AG04449 (cell line): ENCODE measurements at regions of chr3 and their contacts with region 1.

Region 1: DNA sequence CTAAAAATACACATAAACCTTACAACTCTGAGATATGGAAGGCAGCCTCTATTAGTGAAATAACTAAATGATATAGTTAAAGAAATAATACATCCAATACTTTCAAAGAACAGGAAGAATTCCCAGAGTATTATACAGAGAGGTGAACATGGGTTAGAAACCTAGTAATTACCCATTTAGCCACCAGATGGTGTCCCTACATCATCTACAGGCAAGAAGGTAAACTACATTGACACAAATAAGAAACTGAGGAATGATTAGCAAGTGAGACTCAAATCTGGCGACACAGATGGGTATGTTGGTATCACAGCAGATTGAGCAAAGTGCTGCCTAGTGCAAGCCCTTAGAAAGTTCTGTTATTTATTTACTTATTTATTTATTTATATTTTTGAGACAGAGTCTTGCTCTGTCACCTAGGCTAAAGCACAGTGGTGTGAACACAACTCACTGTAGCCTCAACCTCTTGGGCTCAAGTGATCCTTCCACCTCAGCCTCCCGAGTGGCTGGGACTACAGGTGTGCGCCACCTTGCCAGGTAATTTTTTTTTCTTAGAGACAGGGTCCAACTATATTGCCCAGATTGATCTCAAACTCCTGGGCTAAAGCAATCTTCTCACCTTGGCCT is 28.2 kb downstream of the NEK4 start:
- DNase-seq: no peak
- H3K4me3 ChIP-seq: no peak overlapping the region
- CTCF ChIP-seq: peak; percentile 52

Region 2: DNA sequence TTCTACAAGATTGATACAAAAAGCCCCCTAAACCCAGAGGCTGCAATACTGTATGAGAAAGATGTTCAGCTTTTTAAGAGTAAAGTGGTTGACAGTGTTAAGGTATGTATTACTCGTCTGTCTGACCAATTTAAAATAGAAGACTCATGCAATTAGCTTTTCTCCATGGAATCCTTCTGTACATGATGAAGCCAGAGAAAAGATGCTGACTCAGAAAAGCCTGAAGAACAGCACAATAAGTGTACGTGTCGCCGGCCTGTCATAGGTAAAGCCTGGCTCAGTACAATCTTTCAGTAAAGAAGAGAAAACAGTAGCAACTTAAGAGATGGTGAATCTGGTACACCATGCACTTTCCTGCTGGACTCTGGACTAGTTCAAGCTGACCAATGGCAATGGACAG is 11.8 kb after region 1 on chr3:
- CTCF ChIA-PET with region 1: interaction called, 12 read pairs
- POLR2A ChIA-PET with region 1: no interaction called
- DNase-seq: no peak
- H3K4me3 ChIP-seq: no peak overlapping the region
- CTCF ChIP-seq: no peak

Region 3: DNA sequence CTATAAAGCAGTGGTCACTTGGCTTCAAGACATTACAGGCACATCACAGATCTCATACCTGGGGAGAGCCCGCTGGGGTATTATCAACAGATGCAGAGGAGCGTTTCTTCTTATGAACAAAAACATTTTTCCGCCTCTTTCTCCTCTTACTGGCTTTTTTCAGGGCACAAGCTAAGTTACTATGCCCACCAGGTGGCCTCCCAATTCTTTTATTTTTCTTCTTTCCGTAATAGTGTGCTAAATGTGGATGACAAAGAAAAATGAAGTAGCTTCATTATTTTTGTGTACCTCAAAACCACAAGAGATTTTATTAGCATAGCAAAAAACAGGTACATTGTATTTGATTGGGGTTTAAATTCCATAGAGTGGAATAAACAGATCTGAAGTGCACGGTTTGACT is 165.0 kb after region 1 on chr3:
- CTCF ChIA-PET with region 1: no interaction called
- POLR2A ChIA-PET with region 1: no interaction called
- DNase-seq: no peak
- H3K4me3 ChIP-seq: no peak overlapping the region
- CTCF ChIP-seq: no peak

Region 4: GRCh38 chr3:52986938-52987337 is 244.4 kb after region 1 on chr3:
- CTCF ChIA-PET with region 1: interaction called, 12 read pairs
- POLR2A ChIA-PET with region 1: no interaction called
- DNase-seq: no peak
- H3K4me3 ChIP-seq: no peak overlapping the region
- CTCF ChIP-seq: peak; percentile 27

Region 5: DNA sequence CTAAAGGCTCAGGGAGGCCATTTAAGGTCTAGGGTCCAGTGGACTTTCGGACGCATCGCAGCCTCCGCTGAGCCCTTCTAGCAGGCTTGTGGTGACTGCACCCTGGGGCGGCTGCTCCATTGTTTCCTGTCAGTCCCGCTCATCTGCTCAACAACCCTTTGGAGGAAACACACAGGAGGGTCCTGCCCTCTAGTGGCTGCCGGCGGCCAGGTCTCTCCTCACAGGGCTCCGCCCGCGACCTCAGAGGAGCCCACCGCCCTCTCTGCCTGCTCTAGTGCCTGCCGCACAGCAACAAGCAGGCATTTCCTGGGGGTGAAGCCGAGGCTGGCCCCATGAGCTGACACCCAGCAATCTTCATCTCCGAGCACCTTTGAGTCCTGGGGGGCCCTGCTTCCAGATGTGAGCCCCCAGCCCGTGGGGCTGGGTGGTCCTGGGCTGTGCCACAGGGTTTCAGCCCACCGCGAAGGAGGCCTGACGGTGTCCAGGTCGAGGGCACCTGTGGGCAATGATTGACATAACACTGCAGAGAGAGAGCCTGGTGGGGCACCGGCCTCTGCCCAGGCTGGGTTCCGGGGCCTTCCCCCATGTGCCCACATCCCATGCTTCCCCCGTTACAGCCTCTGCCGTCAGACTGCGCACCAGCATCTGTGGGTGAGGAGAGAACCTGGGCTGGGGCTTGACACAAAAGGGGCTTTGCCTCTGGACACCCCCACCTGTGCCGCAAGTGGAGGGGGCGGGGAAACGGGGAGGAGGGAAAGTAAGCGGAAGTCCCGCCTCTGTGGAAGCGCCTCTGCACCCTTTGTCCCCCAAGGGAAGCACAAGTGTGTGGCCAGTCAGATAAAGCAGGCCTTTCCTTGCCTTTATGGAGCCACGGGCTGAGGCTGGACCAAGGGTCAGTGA is 330.4 kb after region 1 on chr3:
- CTCF ChIA-PET with region 1: interaction called, 11 read pairs
- POLR2A ChIA-PET with region 1: no interaction called
- DNase-seq: no peak
- H3K4me3 ChIP-seq: peak overlapping the region; percentile 48
- CTCF ChIP-seq: peak; percentile 95